ENCODE measurements at regions of chrX and their contacts with region 1.

Region 1: GRCh38 chrX:40022421-40022820 is 75.3 kb downstream of the BCOR start:
- DNase-seq: no peak
- H3K4me3 Mint-ChIP-seq: no peak overlapping the region
- H3K27ac Mint-ChIP-seq: peak overlapping the region; percentile 51
- H3K4me1 Mint-ChIP-seq: peaks cover 13% of the 10 kb centered on the region
- H3K27me3 Mint-ChIP-seq: no peaks in the 10 kb centered on the region

Region 2: DNA sequence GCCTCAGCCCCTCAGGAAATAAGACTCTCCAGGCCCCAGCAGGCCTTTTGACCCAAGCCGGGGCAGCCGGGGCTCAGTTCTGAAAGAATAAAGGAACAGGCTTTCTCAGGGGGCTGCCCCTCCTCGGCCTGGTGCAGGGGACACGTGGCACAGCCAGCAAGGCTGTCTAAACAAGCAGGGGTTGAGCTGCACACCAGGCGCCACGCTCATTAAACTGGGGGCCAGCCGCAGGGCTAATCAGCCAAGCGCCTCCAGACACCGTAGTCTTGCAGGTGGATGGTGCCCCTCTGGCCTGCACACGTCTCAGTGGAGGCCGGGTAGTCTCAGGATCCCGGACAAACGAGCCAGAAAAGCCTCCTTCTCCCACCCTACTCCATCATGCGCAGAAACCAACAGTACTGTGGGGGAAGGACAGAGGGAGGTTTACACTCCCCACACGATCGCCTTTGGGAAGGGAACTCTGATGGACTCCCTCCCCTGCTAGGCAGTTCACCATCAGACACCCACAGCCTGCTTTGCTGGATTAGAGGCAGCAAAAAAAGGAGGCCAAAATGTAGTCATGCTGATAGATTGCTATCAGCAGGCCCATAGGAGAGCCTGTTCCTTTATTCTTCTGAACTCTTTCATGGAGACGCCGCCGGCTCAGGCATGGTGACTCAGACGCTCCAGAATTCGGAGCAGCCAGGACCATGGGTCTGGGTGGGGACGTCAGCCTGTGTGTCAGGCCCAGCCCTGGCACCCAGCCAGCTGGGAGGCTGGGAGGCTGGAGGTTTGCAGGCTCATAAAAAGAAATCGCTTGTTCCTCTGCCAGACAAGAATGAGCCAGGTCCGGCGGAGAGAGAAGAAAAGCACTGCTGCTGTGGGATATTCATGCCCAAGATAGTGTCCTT is 267.0 kb before region 1 on chrX:
- CTCF ChIA-PET with region 1: no interaction called
- POLR2A ChIA-PET with region 1: no interaction called
- intact Hi-C with region 1: no loop called
- DNase-seq: no peak
- H3K4me3 Mint-ChIP-seq: no peak overlapping the region
- H3K27ac Mint-ChIP-seq: no peak overlapping the region
- H3K4me1 Mint-ChIP-seq: peaks cover 3% of the 10 kb centered on the region
- H3K27me3 Mint-ChIP-seq: no peaks in the 10 kb centered on the region

Region 3: GRCh38 chrX:40068044-40068443 is 45.6 kb after region 1 on chrX:
- CTCF ChIA-PET with region 1: no interaction called
- POLR2A ChIA-PET with region 1: no interaction called
- intact Hi-C with region 1: loop called (anchors 5 kb)
- DNase-seq: peak; percentile 27
- H3K4me3 Mint-ChIP-seq: no peak overlapping the region
- H3K27ac Mint-ChIP-seq: no peak overlapping the region
- H3K4me1 Mint-ChIP-seq: peaks cover 55% of the 10 kb centered on the region
- H3K27me3 Mint-ChIP-seq: no peaks in the 10 kb centered on the region

Region 4: DNA sequence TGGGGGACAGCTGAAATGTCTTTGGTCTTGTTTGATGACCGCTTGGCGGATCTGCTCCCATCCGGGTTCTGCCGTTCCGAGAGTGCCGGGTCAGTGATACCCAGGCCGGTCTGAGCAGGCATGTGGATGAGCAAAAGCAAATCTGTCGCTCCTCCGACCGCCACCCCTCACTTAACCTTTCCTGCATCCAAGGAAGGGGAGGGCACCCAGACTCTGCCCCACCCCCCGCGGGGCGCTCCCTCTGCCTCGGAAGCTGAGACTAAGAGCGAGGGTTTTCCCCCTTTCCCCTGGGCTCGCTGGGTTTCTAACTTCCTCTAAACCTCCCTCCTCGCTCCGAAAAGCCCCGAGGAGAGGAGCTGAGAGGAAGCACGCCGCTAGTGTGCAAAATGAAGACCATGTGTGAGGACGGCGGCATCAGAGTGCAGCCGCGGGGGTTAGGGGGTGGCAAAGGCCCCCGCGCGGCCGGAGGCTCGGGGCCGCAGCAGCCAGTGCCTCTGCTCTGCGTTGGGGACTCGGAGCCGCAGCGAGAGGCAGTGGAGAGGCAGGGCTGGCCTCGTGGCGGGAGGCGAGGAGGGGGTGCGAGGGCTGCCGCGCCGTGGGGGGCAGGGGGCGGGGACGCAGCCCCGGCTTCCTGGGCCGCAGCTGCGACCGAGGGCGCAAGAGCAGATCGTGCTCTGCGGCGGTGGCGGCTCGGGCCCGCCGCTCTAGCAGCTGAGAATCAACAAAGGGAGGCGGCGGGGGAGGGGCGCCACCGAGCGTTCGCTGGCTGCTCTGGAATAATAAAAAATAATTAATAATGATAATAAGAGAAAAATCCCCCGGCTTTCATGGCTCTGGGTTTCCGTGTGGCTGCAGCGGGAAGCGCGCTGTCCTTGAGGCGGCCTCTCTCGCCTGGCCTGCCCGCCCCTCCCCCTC is 131.2 kb after region 1 on chrX:
- CTCF ChIA-PET with region 1: no interaction called
- POLR2A ChIA-PET with region 1: no interaction called
- intact Hi-C with region 1: no loop called
- DNase-seq: peak; percentile 85
- H3K4me3 Mint-ChIP-seq: peak overlapping the region; percentile 74
- H3K27ac Mint-ChIP-seq: peak overlapping the region; percentile 58
- H3K4me1 Mint-ChIP-seq: peaks cover 7% of the 10 kb centered on the region
- H3K27me3 Mint-ChIP-seq: no peaks in the 10 kb centered on the region

Region 5: GRCh38 chrX:40607381-40607780 is 585.0 kb after region 1 on chrX:
- CTCF ChIA-PET with region 1: no interaction called
- POLR2A ChIA-PET with region 1: no interaction called
- intact Hi-C with region 1: no loop called
- DNase-seq: no peak
- H3K4me3 Mint-ChIP-seq: no peak overlapping the region
- H3K27ac Mint-ChIP-seq: no peak overlapping the region
- H3K4me1 Mint-ChIP-seq: no peaks in the 10 kb centered on the region
- H3K27me3 Mint-ChIP-seq: no peaks in the 10 kb centered on the region